Right ventricle myocardium inferior (tissue), 1 donor: ENCODE measurements at regions of chrX and their contacts with region 1.

Region 1: GRCh38 chrX:41275661-41276609 is 58.0 kb upstream of the DDX3X start:
- DNase-seq: peak; percentile 78
- ATAC-seq: peak; percentile 89

Region 2: GRCh38 chrX:41441934-41442823 is 166.2 kb after region 1 on chrX:
- intact Hi-C with region 1: loop called (anchors 5 kb)
- DNase-seq: peak; percentile 93
- ATAC-seq: peak; percentile 97

Region 3: GRCh38 chrX:41759817-41760216 is 483.9 kb after region 1 on chrX:
- intact Hi-C with region 1: loop called (anchors 5 kb)
- DNase-seq: no peak
- ATAC-seq: no peak